Activated CD4-positive, alpha-beta T cell treated with anti-CD3 and anti-CD28 coated beads for 36 hours (primary cell): ENCODE measurements at regions of chr6 and their contacts with region 1.

Region 1: DNA sequence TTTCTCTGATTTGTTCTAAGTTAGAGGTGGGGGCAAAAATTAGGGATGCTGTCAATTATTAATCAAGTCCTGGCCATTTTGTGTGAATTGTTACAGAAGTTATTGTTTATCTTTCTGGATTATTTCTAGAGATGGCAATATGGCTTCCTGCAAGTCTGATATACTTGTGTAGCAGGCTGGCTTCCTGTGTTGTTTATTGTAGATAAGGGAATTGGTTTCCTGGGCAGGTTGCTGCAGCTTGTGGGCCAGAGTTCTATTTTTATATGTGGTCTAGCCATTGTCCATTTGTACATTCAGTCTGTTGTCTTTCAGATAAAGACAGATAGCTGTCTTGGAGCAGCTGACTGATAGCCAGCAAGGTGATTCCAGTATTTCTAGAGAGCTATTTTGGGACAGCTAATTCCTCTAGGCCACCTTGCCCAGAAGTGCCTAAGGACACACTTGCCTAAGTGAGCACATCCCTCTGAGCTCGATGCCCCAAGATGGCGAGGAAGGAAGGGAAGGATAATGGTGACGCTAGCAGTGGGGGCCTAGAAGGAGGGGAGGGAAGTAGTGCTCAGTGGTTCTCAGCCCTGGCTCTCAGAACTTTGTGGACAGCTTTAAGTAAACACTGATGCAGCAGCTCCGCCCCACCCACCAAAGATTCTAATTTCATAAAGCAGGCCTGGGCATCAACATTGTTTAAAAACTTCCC is 25.5 kb downstream of the DDO start:
- DNase-seq: no peak
- ATAC-seq: no peak
- H3K4me3 Mint-ChIP-seq: no peak overlapping the region
- H3K27ac Mint-ChIP-seq: no peak overlapping the region
- H3K4me1 Mint-ChIP-seq: peaks cover 19% of the 10 kb centered on the region
- H3K27me3 Mint-ChIP-seq: no peaks in the 10 kb centered on the region

Region 2: DNA sequence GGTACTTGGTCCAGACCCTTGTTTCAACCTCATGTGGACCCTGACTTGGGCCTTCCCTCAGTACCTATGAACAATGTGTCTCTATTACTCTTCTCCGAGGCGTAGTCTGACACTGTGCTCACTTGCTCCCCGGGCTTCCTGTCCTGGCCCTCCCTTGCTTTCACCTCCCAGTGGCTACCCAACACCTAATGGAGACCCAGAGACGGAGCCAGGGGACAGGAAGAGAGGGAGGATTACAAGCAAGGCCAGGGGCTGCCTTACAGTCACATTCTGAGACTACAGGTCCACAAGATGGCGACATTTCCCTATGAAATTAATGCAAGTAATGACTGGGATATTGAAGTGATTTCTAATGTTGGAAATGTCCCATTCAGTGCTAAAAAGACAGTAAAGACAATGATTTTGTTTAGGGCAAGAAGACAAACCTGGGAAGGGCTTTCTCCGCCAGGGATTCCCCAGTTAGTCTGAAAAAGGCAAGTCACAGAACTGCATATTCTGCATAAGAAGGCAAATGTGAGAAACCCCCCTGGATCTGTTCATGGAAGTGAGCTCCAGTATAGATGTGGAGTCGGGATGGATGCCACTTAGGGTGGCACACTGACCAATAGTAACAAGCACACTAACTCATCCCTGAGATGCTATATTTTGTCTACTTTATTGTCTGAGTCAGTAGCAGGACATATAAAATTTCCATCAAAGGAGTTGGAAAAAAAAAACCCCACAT is 862.8 kb before region 1 on chr6:
- CTCF ChIA-PET with region 1: no interaction called
- POLR2A ChIA-PET with region 1: no interaction called
- intact Hi-C with region 1: loop called (anchors 1 to 2 kb)
- DNase-seq: peak; percentile 66
- ATAC-seq: peak; percentile 84
- H3K4me3 Mint-ChIP-seq: no peak overlapping the region
- H3K27ac Mint-ChIP-seq: no peak overlapping the region
- H3K4me1 Mint-ChIP-seq: no peaks in the 10 kb centered on the region
- H3K27me3 Mint-ChIP-seq: no peaks in the 10 kb centered on the region

Region 3: GRCh38 chr6:109595998-109596397 is 793.8 kb before region 1 on chr6:
- CTCF ChIA-PET with region 1: no interaction called
- POLR2A ChIA-PET with region 1: no interaction called
- intact Hi-C with region 1: loop called (anchors 5 to 10 kb)
- DNase-seq: peak; percentile 44
- ATAC-seq: peak; percentile 75
- H3K4me3 Mint-ChIP-seq: no peak overlapping the region
- H3K27ac Mint-ChIP-seq: no peak overlapping the region
- H3K4me1 Mint-ChIP-seq: peaks cover 8% of the 10 kb centered on the region
- H3K27me3 Mint-ChIP-seq: no peaks in the 10 kb centered on the region

Region 4: GRCh38 chr6:109705258-109705657 is 684.6 kb before region 1 on chr6:
- CTCF ChIA-PET with region 1: interaction called, 12 read pairs
- POLR2A ChIA-PET with region 1: no interaction called
- intact Hi-C with region 1: loop called (anchors 1 kb)
- DNase-seq: peak; percentile 88
- ATAC-seq: peak; percentile 99
- H3K4me3 Mint-ChIP-seq: no peak overlapping the region
- H3K27ac Mint-ChIP-seq: no peak overlapping the region
- H3K4me1 Mint-ChIP-seq: peaks cover 12% of the 10 kb centered on the region
- H3K27me3 Mint-ChIP-seq: no peaks in the 10 kb centered on the region

Region 5: DNA sequence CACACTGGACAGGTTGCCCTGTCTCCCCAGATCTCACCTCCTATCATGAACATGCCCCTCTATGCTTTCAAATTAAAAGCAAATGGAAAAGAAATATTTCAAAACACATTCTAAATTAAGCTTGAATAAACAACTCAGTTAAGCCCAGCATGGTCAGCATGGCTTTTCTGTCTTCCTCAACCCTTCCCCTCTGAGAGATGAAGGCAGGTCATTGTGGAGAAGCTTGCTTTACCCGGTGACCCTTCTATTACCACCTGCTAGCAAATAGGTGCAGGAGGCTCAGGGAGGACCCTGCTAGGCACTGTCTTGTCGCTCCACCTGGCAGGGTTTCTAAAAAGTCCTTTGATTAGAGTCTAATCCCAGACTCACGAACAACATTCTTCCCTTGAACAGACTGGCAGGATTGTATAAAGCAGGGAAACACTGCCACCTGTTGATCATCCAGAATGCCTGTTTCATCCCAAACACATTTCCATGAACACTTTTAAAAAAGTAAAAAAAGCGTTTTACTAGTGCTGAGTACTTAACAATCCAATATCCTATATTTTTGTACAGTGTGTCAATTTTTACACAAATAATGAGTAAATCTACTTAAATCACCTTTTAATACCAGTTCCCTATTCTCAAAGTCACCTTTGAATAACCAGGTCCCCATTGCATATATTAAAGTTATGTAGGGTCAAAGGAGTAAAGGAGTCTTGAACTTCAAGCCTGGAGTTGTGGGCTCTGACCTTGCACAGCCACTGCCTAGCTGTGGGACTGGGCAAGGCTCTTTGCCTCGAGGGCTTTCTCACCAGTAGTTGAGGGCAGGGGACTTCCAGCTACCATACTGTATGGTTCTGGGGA is 336.2 kb before region 1 on chr6:
- CTCF ChIA-PET with region 1: no interaction called
- POLR2A ChIA-PET with region 1: no interaction called
- intact Hi-C with region 1: loop called in 1 of 2 experiments (anchors 5 kb)
- DNase-seq: no peak
- ATAC-seq: peak; percentile 42
- H3K4me3 Mint-ChIP-seq: no peak overlapping the region
- H3K27ac Mint-ChIP-seq: no peak overlapping the region
- H3K4me1 Mint-ChIP-seq: no peaks in the 10 kb centered on the region
- H3K27me3 Mint-ChIP-seq: no peaks in the 10 kb centered on the region

Region 6: DNA sequence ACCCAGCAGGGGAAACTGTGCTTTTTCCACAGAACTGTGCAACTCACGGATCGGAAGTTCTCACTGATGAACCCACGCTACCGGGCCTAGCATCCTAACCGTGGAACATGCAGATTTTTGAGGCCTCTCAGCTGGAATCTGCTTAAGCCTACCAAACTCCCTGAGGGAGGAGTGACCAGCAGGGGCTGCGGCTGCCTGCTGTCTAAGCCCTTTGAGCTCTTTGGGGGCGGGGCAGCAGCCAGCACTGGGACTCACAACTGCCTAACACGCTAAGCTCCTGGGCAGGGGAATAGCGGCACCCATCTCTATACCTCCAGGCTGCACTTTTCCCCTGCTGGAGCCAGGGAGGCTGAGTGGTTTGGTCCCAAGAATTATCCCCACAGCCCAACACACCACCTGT is 11.3 kb before region 1 on chr6:
- CTCF ChIA-PET with region 1: interaction called, 17 read pairs
- POLR2A ChIA-PET with region 1: no interaction called
- intact Hi-C with region 1: no loop called
- DNase-seq: no peak
- ATAC-seq: no peak
- H3K4me3 Mint-ChIP-seq: no peak overlapping the region
- H3K27ac Mint-ChIP-seq: no peak overlapping the region
- H3K4me1 Mint-ChIP-seq: no peaks in the 10 kb centered on the region
- H3K27me3 Mint-ChIP-seq: peaks cover 2% of the 10 kb centered on the region

Region 7: GRCh38 chr6:110421749-110422443 is 32.1 kb after region 1 on chr6:
- CTCF ChIA-PET with region 1: no interaction called
- POLR2A ChIA-PET with region 1: no interaction called
- intact Hi-C with region 1: no loop called
- DNase-seq: no peak
- ATAC-seq: no peak
- H3K4me3 Mint-ChIP-seq: no peak overlapping the region
- H3K27ac Mint-ChIP-seq: no peak overlapping the region
- H3K4me1 Mint-ChIP-seq: no peaks in the 10 kb centered on the region
- H3K27me3 Mint-ChIP-seq: peaks cover 28% of the 10 kb centered on the region

Region 8: DNA sequence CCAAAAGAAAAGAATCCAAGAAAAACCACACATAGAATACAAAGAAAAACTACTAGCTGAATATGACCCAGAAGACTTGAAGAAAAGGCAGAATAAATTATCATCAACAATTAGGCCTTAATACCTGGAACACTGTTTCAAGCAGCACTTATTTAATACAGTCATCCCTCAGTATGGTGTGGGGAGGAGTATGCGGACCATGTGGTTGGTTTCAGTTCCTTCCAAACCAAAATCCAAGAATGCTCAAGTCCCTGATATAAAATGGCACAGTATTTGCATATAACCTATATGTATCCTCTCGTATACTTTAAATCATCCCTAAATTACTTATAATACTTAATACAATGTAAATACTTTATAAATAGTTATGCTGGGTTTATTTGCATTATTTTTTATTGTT is 409.4 kb after region 1 on chr6:
- CTCF ChIA-PET with region 1: no interaction called
- POLR2A ChIA-PET with region 1: no interaction called
- intact Hi-C with region 1: no loop called
- DNase-seq: no peak
- ATAC-seq: no peak
- H3K4me3 Mint-ChIP-seq: no peak overlapping the region
- H3K27ac Mint-ChIP-seq: no peak overlapping the region
- H3K4me1 Mint-ChIP-seq: peaks cover 2% of the 10 kb centered on the region
- H3K27me3 Mint-ChIP-seq: no peaks in the 10 kb centered on the region